Activated T-helper 2 cell treated with anti-CD3 and anti-CD28 coated beads, Interferon-gamma antibody, Interleukin-2, Interleukin-4, amounts not matched to agents 10 μg/mL and 5 μg/mL and 100 μg/mL, durations not matched to agents 14 hours and 24 hours and 36 hours (primary cell): ENCODE measurements at regions of chr7 and their contacts with region 1.

Region 1: DNA sequence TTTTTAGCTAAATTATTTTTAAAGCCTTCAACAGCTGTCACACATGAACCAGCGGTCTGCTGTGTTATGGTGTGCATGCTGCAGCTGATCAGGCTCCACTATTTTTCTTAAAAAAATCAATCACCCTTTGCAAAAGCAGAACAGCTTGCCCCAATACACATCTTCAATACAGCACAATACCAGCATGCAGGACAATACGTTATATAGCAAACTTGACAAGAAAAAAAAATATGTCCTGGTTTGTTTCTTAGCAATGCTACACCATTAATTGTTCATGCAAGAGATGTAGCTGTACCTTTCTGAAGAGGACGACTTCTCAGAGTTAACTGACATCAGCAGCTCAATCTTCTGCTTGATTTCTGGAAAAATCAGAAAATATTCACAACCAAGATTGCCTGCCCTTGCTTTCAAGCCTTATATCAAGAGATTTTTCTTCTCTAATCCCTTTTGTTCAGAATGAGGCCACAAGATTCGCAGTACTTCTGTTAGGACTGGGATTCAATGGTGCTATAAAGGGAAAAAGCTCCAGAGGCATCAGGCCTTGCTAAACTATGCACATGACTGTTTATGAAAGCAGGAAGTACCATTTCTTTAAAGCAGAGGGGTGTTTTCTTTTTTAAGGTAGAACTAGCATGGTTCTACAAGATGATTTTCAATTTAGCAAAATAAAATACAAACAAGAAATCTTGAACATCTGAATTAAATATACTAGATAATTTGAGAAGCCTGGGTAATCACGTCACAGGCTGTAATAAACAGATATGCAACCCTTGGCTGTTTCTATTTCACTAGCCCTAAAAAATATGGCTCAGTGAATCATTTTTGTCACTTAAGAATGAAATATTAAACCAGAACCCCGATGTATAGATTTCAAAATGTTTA is 120.0 kb downstream of the SRPK2 start:
- DNase-seq: no peak
- H3K4me3 Mint-ChIP-seq: peak overlapping the region; percentile 72
- H3K27ac Mint-ChIP-seq: peak overlapping the region; percentile 64
- H3K4me1 Mint-ChIP-seq: peaks cover 39% of the 10 kb centered on the region
- H3K27me3 Mint-ChIP-seq: no peaks in the 10 kb centered on the region

Region 2: DNA sequence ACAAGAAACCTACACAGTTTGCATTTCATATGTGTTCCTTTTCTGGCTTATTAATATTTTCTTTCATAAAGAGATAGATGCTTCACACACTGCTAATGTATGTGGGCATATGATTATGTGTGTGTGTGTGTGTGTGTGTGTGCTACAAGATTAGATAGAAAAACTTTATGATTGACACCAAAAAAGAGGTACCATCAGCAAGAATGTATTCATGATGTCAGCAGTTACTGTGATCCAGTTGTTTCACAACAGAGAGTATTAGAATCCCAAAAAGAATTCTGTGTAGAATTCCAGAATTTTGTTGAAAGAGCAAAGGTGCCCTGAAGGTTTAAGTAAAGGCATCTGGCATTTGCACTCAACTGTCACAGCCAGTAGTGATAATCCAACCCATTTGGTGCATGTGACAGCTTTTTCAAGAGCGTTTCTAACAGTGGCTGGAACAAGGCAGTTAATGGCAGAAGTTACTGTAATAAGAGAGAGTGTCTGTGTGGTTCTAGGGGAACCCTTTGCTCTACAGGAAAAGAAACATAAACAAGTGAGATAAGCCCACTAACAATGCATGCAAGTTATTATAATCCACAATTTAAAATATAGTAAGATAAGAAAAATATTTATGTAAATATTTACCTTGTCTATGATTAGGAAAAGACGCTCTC is 1295.8 kb before region 1 on chr7:
- intact Hi-C with region 1: no loop called
- DNase-seq: no peak
- H3K4me3 Mint-ChIP-seq: no peak overlapping the region
- H3K27ac Mint-ChIP-seq: no peak overlapping the region
- H3K4me1 Mint-ChIP-seq: no peaks in the 10 kb centered on the region
- H3K27me3 Mint-ChIP-seq: no peaks in the 10 kb centered on the region

Region 3: DNA sequence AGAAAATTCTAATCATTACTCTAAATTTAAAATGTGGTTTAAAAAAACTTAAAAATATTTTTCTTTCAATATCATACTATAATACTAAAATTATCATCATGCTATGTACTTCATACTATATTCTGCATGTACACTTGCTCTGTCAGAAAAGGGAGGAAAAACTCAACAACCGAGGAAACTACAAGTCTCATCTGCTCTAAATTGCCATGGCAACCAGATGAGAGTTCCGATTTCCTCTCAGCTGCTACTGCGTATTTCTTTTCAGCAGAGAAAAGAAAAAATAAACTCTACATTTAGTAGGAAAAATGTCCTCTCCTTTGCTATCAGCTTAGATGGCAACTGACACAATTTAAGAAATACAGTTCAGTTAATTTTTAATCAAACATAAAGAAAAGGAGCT is 58.9 kb before region 1 on chr7:
- intact Hi-C with region 1: loop called (anchors 5 kb)
- DNase-seq: no peak
- H3K4me3 Mint-ChIP-seq: no peak overlapping the region
- H3K27ac Mint-ChIP-seq: no peak overlapping the region
- H3K4me1 Mint-ChIP-seq: peaks cover 62% of the 10 kb centered on the region
- H3K27me3 Mint-ChIP-seq: no peaks in the 10 kb centered on the region